ENCODE measurements at regions of chr14 and their contacts with region 1.

Region 1: DNA sequence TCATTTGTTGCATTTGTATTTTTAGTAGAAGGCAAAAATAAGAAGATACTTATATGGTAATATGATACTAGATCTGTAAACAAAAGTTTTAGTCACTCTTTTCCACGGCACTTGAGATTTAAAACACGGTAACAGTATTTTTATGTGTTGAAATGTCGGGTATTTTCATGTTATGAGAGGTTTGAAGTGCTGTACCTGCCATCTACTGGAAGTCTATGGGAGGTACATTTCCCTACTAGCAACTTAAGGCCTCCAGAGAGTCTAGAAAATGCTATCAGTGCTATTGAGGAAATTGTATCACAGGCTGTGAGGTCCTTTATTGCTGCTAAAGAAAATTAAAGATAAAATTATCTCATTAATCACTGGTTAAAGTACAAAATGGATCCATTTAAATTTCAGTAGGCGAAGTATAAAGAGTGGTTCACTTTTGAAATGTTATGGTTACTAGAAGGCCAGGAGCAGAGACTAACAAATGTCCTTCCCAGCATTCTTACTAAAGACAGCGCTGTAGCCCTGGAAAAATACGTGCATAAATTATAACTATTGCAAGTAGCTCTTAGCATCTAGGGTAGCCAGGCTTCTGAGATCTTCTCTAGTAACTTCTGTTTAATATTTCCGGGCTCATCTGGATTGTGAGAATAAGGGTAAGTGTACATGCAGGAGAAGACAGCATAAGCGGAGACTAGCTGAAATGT is 77.6 kb upstream of the PRKD1 start:
- DNase-seq: peak; percentile 28
- H3K4me3 ChIP-seq: no peak overlapping the region
- CTCF ChIP-seq: peak; percentile 57

Region 2: GRCh38 chr14:29548948-29549370 is 456.3 kb before region 1 on chr14:
- CTCF ChIA-PET with region 1: interaction called, 38 read pairs
- POLR2A ChIA-PET with region 1: no interaction called
- DNase-seq: peak; percentile 17
- H3K4me3 ChIP-seq: no peak overlapping the region
- CTCF ChIP-seq: peak; percentile 23

Region 3: DNA sequence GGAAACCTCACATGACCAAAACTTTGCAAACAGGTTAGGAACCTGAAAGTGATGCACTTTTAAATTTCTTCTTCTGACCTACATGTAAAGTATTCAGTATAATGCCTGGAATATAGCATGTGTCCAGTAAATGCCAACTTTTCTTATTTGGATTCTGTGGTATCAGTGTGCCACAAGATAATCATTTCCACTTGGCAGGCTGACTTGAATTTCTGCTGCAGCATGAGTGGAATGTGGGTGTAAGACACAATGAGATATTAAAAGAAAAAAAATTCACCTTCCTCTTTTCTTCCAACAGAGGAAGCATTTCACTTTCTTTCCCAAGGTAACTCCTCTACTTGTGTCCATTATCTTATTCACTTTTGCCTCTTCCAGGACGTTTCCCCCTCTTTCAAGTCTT is 64.3 kb after region 1 on chr14:
- CTCF ChIA-PET with region 1: no interaction called
- POLR2A ChIA-PET with region 1: no interaction called
- DNase-seq: no peak
- H3K4me3 ChIP-seq: no peak overlapping the region
- CTCF ChIP-seq: no peak

Region 4: DNA sequence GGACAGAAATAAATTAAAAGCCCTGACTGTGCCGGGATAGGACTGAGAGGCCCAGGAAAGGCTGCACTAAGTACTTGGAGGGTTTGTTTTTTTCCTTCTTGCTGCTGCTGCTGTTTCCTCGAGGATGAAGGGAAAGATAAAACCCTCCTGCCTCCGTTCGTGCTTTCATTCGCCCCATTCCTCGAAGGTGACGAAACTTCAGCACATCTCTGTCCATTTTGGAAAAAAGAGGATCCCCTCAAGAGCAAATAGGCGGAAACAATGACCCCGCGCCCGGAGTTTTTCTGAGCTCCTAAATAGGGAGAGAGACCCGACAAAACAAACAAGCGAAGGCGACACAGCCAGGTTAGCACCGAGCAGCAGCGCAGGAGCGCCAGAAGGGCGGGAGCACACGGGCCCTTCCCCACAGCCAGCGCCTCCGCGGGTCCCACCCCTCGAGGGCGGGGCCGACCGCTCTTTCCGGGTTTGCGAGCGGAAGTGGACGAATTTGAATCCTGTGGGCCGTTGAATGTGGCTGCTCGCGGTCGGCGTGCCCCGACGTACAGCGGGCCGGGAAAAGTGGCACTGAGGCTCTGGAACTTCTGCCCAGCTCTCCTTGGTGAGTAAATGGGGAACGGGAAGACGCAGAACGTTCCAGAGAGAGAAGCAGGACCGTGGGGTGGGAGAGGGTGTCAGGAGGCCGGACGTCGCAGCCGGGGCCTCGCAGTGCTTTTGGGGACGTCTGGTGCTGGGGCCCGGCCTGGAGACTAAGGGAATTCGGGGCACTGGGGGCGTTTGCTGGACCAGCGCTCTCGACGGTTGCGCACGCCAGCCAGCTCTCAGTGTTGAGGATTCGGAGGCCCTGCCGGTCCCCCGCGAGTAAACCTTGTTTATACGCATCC is 553.7 kb after region 1 on chr14 and contains the start of gene G2E3:
- CTCF ChIA-PET with region 1: no interaction called
- POLR2A ChIA-PET with region 1: no interaction called
- DNase-seq: no peak
- H3K4me3 ChIP-seq: peak within 1 kb of the TSS; percentile 96
- CTCF ChIP-seq: no peak

Measured in AG04449 (cell line).